ENCODE measurements at regions of chr14 and their contacts with region 1.

Region 1: DNA sequence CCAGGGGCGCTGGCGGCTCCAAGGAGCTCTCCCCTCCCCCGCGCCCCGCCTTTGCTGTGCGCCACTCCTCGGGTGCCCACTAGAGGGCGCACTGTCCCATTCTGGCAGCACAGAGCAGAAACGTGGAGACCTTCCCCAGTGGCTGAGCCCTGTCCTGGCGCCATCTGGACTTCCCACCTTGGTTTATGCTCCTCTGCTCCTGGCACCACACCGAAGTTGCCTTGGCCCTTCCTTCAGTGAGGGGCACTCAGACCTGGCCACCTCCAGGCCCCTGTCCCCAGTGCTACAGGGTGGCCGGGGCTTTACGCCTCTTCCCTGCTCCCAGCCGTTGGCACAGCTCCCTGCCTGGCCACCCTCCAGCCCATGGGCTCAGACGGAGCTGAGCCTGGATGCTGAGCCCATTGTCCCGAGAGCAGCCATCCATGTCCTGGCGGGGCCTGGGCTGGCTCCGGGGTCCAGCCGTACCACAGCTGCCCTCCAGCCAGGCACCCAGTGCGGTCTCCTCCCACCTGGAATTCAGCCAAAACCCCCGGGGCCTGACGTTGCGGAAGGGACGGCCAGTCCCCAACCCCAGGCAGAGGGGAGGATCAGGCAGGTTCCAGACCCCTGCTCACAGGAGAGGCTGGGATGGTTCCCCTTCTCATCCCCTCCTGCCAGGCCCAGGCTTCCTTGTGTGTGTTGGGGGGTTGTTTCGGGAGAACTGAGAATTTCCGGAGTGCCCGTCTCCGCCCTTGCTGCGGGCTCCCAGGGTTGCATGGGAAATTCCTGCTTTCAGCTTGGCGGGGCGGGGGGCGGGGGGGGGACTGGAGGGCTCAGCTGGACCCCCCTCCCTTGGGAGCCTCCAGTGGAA is 5.5 kb upstream of the CRIP1 start:
- DNase-seq: peak; percentile 86 to 95
- ATAC-seq: peak; percentile 41 to 70
- H3K4me3 ChIP-seq: peak overlapping the region; percentile 48
- H3K27ac ChIP-seq: peak overlapping the region; percentile 99 to 100
- H3K4me1 ChIP-seq: peaks cover 90% of the 10 kb centered on the region
- CTCF ChIP-seq: peak; percentile 96
- EP300 ChIP-seq: no peak
- POLR2A ChIP-seq: peak; percentile 61
- RAD21 ChIP-seq: peak; percentile 72

Region 2: DNA sequence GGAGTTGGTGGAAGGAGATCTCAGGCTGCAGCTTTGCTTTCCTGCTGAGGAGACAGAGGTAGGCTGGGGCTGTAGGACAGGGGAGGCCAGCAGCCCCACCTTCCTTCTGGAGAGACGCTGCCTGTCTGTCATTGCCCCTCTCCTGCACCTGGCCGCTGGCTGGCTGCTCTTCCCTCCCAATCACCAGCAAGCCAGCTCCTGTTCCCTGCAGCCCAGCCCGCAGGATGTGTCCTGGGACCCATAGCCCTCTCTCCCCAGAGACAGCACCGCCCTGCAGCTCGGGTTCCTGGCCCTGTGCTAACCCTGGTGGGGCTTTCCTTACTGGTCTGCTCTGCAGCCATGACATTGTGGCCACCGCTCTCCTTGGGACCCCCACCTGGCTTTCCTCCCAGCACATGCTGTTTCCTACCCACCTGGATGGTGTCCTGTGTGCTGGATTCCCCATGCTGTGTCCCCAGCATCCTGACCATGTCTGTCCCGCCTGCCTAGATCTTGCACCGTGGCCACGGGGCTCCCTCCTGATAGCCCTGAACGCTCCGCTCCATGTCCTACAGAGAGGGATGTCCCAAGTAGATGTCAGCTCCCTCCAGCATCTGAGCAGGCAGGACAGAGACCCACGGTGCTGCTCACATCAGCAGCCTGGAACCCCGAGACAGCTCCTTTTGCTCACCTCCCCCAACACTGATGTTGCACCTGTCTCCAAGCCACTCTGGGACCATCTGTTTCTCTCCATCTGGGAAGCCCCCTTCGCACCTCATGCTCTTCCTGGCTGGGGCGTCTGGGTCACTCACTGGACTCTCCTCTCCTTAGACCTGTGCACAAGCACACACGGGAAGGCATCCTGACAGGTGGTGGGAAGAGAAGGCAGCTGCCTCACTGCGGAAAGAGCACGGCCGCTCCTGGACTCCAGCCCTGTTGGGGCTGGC is 62.6 kb before region 1 on chr14:
- CTCF ChIA-PET with region 1: interaction called, 15 read pairs
- POLR2A ChIA-PET with region 1: no interaction called
- DNase-seq: no peak
- ATAC-seq: no peak
- H3K4me3 ChIP-seq: peak overlapping the region; percentile 97
- H3K27ac ChIP-seq: peak overlapping the region; percentile 99 to 100
- H3K4me1 ChIP-seq: peaks cover 24% of the 10 kb centered on the region; the same call in 2 of the 3 replicates
- CTCF ChIP-seq: no peak
- EP300 ChIP-seq: no peak
- POLR2A ChIP-seq: no peak
- RAD21 ChIP-seq: no peak

Region 3: GRCh38 chr14:105439691-105440553 is 41.3 kb before region 1 on chr14:
- CTCF ChIA-PET with region 1: interaction called, 24 read pairs
- POLR2A ChIA-PET with region 1: interaction called, 3 read pairs
- DNase-seq: peak; percentile 45 to 60
- ATAC-seq: peak; percentile 54 to 85; a peak in 5 of 6 replicates
- H3K4me3 ChIP-seq: no peak overlapping the region
- H3K27ac ChIP-seq: no peak overlapping the region
- H3K4me1 ChIP-seq: no peaks in the 10 kb centered on the region
- CTCF ChIP-seq: peak; percentile 46
- EP300 ChIP-seq: no peak
- POLR2A ChIP-seq: no peak
- RAD21 ChIP-seq: peak; percentile 23 to 36; a peak in 2 of 5 replicates

Region 4: DNA sequence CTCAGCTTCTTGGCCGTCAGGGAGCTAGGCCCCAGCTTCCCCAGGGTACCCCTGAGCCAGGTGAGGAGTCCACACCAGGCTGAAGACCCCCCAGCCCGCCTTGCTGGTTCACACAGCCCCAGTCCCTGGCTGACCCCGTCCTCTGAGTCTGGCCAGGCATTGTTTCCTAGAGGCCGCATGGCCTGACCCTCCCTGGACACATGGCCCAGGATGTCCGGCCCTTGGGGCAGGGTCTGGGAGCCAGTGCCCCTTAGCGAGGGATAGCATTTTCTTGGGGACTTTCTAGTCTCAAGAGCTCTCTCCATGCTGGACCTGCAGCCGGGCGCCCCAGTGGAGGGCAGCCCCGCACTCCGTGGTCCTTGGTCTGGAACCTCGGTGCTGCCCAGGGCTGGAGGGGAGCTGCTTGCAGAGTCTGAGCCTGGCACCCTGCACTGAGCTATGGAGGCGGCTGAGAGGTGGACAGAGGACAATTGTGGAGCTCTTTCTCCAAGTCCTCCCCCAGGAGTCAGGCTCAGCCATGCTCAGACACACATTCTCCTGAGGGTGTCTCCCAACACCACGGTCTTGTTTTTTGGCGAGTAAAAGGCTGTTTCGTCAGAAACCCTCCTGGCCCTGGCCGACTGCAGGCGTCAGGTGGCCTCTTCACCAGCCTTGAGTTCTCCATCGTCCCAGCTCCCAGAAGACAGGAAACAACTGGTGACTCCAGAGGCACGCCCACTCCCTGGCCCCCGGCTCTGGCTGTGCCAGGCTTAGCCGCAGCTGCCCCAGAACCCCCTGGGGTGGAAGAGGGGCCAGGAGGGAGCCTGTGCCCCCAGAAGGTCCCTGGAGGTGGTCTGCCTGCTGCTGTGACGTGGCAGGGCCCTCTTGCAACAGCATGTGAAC is 24.2 kb before region 1 on chr14:
- CTCF ChIA-PET with region 1: interaction called, 26 read pairs
- POLR2A ChIA-PET with region 1: no interaction called
- DNase-seq: peak in 1 of 2 experiments; percentile 35
- ATAC-seq: peak in 1 of 2 experiments; percentile 15; a peak in 3 of 6 replicates
- H3K4me3 ChIP-seq: no peak overlapping the region
- H3K27ac ChIP-seq: no peak overlapping the region
- H3K4me1 ChIP-seq: no peaks in the 10 kb centered on the region
- CTCF ChIP-seq: no peak
- EP300 ChIP-seq: no peak
- POLR2A ChIP-seq: no peak
- RAD21 ChIP-seq: no peak

Region 5: GRCh38 chr14:105527661-105528581 is 46.7 kb after region 1 on chr14:
- CTCF ChIA-PET with region 1: interaction called, 25 read pairs
- POLR2A ChIA-PET with region 1: interaction called, 3 read pairs
- DNase-seq: peak; percentile 76 to 81
- ATAC-seq: peak; percentile 45 to 80
- H3K4me3 ChIP-seq: peak overlapping the region; percentile 52
- H3K27ac ChIP-seq: peak overlapping the region; percentile 92 to 96
- H3K4me1 ChIP-seq: peaks cover 21% of the 10 kb centered on the region
- CTCF ChIP-seq: peak; percentile 89
- EP300 ChIP-seq: no peak
- POLR2A ChIP-seq: peak; percentile 20; the same call in 1 of the 2 replicates
- RAD21 ChIP-seq: peak; percentile 80 to 92

Region 6: DNA sequence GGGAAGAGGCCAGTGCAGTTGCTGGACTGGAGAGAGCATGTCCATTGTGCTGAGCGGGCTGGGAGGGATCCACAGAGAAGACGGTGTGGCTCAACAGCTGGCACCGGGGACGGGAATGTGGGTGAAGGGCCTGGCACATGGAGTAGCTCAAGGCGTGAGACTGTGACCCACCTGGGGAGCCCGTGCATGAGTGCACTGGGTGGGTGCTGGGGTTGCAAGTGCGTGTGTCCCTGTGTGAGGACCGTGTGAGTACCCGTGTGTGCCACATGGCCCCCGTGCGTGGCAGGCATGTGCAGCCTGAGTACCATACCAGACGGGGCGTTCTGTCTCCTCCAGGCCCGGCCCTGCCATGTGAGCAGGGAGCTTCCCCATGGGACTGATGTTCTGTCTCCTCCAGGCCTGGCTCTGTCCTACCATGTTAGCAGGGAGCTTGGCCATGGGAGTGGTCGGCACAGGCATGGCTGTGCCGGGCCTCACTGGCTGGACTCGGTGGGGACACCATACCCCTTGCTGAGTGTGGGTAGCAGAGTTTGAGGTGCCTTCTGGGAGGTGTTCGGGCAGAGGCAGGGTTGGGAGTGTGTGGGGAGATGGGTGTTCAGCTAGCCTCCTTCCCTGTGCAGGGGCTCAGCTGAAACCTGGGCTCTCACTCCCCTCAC is 279.6 kb after region 1 on chr14:
- CTCF ChIA-PET with region 1: no interaction called
- POLR2A ChIA-PET with region 1: no interaction called
- DNase-seq: no peak
- ATAC-seq: peak in 1 of 2 experiments; percentile 20; a peak in 2 of 6 replicates
- H3K4me3 ChIP-seq: no peak overlapping the region
- H3K27ac ChIP-seq: no peak overlapping the region
- H3K4me1 ChIP-seq: no peaks in the 10 kb centered on the region
- CTCF ChIP-seq: no peak
- EP300 ChIP-seq: no peak
- POLR2A ChIP-seq: no peak
- RAD21 ChIP-seq: no peak

Measured in A549 (cell line).